PC-9 (cell line): ENCODE measurements at regions of chr3 and their contacts with region 1.

Region 1: DNA sequence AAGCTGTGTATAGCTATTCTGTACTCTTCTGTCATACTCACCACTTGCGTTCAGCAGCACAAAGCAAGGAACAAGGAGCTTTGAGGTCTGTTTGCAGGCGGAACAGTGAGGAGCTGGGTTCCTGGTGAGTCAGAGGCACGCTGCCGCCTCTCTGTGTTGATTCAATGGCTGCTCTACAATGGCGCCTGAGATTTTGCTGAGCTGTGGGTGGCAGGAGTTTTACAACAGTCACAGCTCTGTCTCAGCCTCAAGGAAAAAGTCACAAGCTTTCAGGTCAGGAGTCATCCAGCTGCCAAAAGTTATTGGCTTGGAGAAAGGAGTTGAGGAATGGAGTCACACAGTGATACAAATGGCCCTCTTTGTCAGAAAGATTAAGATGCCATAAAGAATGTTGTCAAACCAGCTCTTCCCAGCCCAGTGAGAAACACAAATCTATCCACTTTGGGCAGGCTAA is 98.1 kb downstream of the SSR3 start:
- DNase-seq: peak; percentile 72 to 87
- H3K4me3 ChIP-seq: peak overlapping the region; percentile 38; the same call in 1 of the 2 replicates
- H3K27ac ChIP-seq: peak overlapping the region; percentile 74
- H3K4me1 ChIP-seq: peaks cover 22% of the 10 kb centered on the region
- H3K27me3 ChIP-seq: no peaks in the 10 kb centered on the region
- CTCF ChIP-seq: no peak

Region 2: DNA sequence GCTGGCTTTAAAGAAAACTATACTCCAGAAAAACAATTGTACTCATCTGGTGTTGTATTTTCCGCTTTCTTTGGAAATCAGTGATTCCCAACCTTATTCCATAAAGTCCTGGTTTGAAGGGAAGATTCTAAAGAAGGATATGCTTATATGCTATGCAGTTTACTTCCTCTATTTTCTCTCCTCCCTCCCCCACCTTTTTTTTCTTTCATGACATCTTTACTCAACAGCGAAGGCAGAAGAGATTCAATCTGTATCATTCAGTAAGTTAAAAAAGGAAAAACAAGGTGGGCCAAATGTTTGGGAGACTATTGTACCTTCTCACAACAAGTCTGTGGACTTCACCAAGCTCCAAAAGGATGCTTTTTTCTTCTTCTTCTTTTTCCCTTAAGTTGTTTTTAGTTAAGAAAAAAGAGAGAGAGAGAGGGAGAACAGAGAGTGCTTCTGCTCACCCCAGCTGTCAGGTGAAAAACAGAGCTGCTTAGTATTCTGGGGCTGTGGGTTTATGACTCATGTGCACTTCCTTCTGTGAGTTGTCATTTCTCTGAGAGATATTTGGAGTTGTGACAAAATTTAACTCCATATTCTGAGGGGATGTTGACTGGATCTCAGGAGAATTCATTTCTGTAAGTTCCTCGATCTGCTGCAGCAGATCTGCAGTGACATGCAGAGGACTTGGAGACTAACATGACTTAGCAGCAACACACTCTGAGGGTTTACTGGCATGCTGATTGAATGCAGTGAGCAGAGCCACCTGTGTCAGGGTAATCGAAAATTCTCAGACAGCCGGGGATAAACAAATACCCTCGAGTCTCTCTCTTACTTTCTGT is 27.4 kb after region 1 on chr3:
- CTCF ChIA-PET with region 1: no interaction called
- POLR2A ChIA-PET with region 1: no interaction called
- intact Hi-C with region 1: loop called (anchors 2 kb)
- DNase-seq: peak; percentile 16 to 60
- H3K4me3 ChIP-seq: no peak overlapping the region
- H3K27ac ChIP-seq: 0 out of 2 replicates have a peak overlapping the region, but pooled peaks have one; percentile 15
- H3K4me1 ChIP-seq: peaks cover 21% of the 10 kb centered on the region
- H3K27me3 ChIP-seq: no peaks in the 10 kb centered on the region
- CTCF ChIP-seq: no peak

Region 3: GRCh38 chr3:156509189-156510174 is 52.7 kb after region 1 on chr3:
- CTCF ChIA-PET with region 1: no interaction called
- POLR2A ChIA-PET with region 1: no interaction called
- intact Hi-C with region 1: no loop called
- DNase-seq: peak; percentile 9 to 58
- H3K4me3 ChIP-seq: no peak overlapping the region
- H3K27ac ChIP-seq: no peak overlapping the region
- H3K4me1 ChIP-seq: peaks cover 11% of the 10 kb centered on the region
- H3K27me3 ChIP-seq: no peaks in the 10 kb centered on the region
- CTCF ChIP-seq: peak; percentile 88

Region 4: DNA sequence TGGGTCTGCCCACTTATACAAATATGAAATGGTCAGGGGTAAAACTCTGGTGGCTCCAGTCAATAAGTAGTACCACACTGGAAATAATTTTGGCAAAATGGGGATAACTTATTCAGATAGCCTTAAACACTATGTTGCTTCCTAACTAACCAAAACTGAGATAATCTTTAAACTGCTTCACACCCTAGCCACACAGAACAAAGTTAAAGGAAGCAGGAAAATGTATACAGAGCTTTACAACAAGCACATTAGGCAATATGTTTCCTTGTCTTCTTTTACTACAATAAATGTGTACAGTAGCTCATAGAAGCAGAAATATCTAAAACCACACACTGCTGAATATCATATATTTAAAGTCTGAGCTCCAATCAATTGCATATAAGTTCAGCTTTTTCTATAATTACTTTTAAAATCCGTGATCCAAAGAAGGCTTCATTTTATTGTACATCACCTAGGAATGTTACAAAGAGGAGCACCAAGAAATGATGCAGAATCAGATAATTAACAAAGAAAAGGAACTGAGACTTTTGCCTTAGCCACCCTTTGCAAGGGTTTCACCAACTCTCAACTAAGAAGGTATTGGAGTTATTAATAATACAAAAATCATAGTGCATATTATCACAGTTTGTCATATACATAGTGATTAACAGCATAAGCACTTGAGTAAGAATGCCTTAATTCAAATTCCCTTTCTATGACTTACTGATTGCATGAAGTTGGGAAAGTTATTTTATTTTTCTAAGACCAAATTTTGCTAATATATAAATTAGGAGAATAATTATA is 107.3 kb after region 1 on chr3:
- CTCF ChIA-PET with region 1: no interaction called
- POLR2A ChIA-PET with region 1: no interaction called
- intact Hi-C with region 1: no loop called
- DNase-seq: peak in 1 of 2 experiments; percentile 35
- H3K4me3 ChIP-seq: no peak overlapping the region
- H3K27ac ChIP-seq: no peak overlapping the region
- H3K4me1 ChIP-seq: no peaks in the 10 kb centered on the region
- H3K27me3 ChIP-seq: no peaks in the 10 kb centered on the region
- CTCF ChIP-seq: no peak

Region 5: DNA sequence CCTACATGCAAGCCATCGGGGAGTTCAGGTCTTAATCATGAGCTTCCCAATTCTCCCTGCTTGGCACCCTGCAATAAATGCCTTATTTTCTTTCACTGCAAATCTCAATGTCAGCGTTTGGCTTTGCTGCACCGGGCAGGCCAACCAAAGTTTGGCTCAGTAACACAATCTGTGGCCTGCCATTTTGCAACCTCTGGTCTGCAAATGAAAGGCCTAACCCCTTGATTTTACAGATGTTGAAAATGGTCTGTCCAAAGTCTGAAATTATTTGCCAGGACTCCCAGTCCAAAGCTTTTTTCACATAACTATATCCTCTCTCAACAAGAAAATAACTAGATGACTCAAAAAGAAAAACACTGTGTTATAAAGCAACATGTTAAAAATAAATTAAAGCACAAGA is 335.3 kb after region 1 on chr3:
- CTCF ChIA-PET with region 1: no interaction called
- POLR2A ChIA-PET with region 1: interaction called, 15 read pairs
- intact Hi-C with region 1: no loop called
- DNase-seq: no peak
- H3K4me3 ChIP-seq: no peak overlapping the region
- H3K27ac ChIP-seq: no peak overlapping the region
- H3K4me1 ChIP-seq: peaks cover 24% of the 10 kb centered on the region
- H3K27me3 ChIP-seq: no peaks in the 10 kb centered on the region
- CTCF ChIP-seq: no peak